Right ventricle myocardium inferior (tissue), 1 donor: ENCODE measurements at regions of chr17 and their contacts with region 1.

Region 1: GRCh38 chr17:15157051-15157450 is 108.1 kb downstream of the PMP22 start:
- DNase-seq: no peak
- ATAC-seq: no peak

Region 2: DNA sequence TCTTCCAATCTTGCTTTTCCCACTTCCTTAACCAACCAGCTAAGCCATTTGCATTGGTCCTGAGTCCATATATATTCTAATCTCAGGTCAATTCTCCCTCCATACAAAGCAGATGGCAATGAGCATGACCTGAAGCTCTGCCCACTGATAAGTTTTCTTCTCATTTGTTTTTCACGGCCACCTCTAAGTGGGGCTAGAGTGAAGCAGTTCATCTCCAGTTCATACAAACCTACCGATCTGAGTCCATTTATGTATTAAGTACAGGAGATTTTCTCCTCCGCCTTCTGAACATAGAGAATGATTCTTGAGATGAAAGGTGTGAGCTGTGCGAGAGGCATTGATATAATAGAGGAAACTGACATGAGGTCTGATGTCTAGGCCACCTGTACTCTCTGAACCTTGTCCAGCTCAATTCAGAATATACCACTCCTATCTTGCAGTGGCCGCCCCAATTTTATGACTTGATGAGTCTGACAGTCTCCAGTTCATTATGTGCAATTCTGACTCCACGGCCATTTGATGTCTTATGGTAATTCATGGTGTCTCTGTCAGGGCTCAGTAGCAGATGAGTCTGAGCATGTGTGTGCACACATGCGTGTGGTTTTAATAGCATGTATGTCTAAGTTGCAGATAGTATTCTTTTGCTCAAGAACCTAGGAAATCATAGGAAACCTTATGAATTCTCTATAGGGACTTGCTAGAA is 221.8 kb before region 1 on chr17:
- intact Hi-C with region 1: loop called (anchors 2 kb)
- DNase-seq: no peak
- ATAC-seq: no peak

Region 3: GRCh38 chr17:15076991-15077663 is 79.9 kb before region 1 on chr17:
- intact Hi-C with region 1: loop called (anchors 5 kb)
- DNase-seq: no peak
- ATAC-seq: peak; percentile 70